CD4-positive, alpha-beta memory T cell (primary cell): ENCODE measurements at regions of chr21 and their contacts with region 1.

Region 1: GRCh38 chr21:33348706-33349105 is 23.9 kb downstream of the IFNAR1 start:
- DNase-seq: no peak
- H3K4me3 ChIP-seq: no peak overlapping the region
- H3K4me3 Mint-ChIP-seq: no peak overlapping the region
- H3K27ac ChIP-seq: no peak overlapping the region
- H3K27ac Mint-ChIP-seq: peak overlapping the region in 1 of 7 donors; percentile 52
- H3K4me1 ChIP-seq: peaks cover 15% of the 10 kb centered on the region
- H3K4me1 Mint-ChIP-seq: peaks cover 8 to 24% (median 14%) of the 10 kb centered on the region in 4 donors
- H3K27me3 ChIP-seq: no peaks in the 10 kb centered on the region
- H3K27me3 Mint-ChIP-seq: no peaks in the 10 kb centered on the region

Region 2: DNA sequence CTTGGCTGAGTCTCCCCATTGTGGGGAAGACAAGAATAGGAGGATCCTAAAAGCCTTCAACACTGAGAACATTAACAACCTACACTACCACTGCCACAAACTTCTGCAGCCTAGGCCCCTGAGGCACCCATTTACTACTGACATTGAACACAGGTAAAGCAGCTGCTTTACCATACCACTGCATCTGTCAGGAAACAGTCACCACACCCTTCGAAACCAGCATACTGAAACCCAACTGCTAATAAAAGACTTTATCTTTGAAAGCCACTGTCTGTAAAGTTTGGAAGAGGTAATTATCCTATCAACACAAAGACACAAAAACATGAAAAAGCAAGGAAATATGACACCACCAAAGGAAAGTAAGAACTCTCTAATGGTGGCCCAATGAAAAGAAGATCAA is 16.6 kb before region 1 on chr21:
- CTCF ChIA-PET with region 1: interaction called, 11 read pairs
- POLR2A ChIA-PET with region 1: interaction called, 5 read pairs
- intact Hi-C with region 1: no loop called
- DNase-seq: peak in 2 of 5 donors; percentile 14 to 25
- H3K4me3 ChIP-seq: no peak overlapping the region
- H3K4me3 Mint-ChIP-seq: peak overlapping the region; percentile 21 to 73 (median 37)
- H3K27ac ChIP-seq: peak overlapping the region; percentile 13
- H3K27ac Mint-ChIP-seq: peak overlapping the region; percentile 5 to 92 (median 77)
- H3K4me1 ChIP-seq: peaks cover 60% of the 10 kb centered on the region
- H3K4me1 Mint-ChIP-seq: peaks cover 41 to 70% (median 53%) of the 10 kb centered on the region in 4 donors
- H3K27me3 ChIP-seq: no peaks in the 10 kb centered on the region
- H3K27me3 Mint-ChIP-seq: no peaks in the 10 kb centered on the region